ENCODE measurements at regions of chr11 and their contacts with region 1.

Region 1: DNA sequence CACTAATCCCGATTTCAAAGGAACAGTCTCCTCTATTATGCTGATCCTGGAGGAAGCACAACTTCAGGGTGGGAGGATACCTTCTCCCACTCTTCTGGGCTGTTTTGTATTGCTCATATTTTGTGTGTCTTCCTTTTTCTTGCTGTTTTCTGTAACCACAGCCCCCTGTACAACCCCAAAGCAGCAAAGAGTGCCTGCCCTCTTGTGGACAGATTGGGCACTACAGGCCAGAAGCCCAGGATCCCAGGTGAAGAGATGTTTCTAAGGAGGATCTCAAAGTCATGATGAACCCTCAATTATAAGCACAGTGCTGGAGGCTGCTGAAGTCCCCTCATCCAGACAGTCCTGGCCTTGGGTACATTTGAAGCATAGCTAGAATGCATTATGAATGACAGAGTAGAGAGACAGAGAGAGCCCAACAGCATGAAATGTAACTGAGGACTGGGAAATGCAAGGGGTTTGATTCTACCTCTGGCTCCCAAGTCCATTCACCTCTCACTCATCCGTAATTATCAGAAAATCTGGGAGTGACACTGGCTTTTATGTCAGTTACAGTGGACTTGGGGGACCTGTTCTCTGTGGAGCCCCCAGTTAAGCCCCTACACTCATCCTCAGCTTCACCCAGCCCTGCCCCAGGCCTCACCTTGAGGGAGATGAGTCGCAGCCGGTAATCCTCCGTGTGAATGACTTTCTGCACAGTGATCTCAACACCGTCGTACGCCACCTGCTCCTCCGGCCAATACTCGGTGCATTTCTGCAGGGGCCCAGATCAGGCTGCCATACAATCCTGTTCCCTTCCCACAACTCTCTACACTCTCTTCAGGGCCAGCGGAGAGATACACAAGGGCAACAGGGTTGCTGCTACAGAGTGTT is 6.2 kb upstream of the IGSF22 start:
- DNase-seq: peak; percentile 40 to 82 (median 67)
- ATAC-seq: peak; percentile 80
- H3K4me3 ChIP-seq: no peak overlapping the region
- H3K4me3 Mint-ChIP-seq: no peak overlapping the region
- H3K27ac ChIP-seq: no peak overlapping the region
- H3K27ac Mint-ChIP-seq: no peak overlapping the region
- H3K4me1 ChIP-seq: peaks cover 17% of the 10 kb centered on the region
- H3K4me1 Mint-ChIP-seq: peaks cover 10% of the 10 kb centered on the region
- H3K27me3 ChIP-seq: no peaks in the 10 kb centered on the region
- H3K27me3 Mint-ChIP-seq: no peaks in the 10 kb centered on the region
- CTCF ChIP-seq: peak; percentile 97

Region 2: GRCh38 chr11:18253231-18253630 is 479.0 kb before region 1 on chr11:
- CTCF ChIA-PET with region 1: no interaction called
- POLR2A ChIA-PET with region 1: no interaction called
- intact Hi-C with region 1: loop called in 1 of 2 experiments (anchors 10 kb)
- DNase-seq: no peak
- ATAC-seq: no peak
- H3K4me3 ChIP-seq: no peak overlapping the region
- H3K4me3 Mint-ChIP-seq: no peak overlapping the region
- H3K27ac ChIP-seq: no peak overlapping the region
- H3K27ac Mint-ChIP-seq: no peak overlapping the region
- H3K4me1 ChIP-seq: no peaks in the 10 kb centered on the region
- H3K4me1 Mint-ChIP-seq: no peaks in the 10 kb centered on the region
- H3K27me3 ChIP-seq: no peaks in the 10 kb centered on the region
- H3K27me3 Mint-ChIP-seq: peaks cover 8% of the 10 kb centered on the region
- CTCF ChIP-seq: no peak

Region 3: DNA sequence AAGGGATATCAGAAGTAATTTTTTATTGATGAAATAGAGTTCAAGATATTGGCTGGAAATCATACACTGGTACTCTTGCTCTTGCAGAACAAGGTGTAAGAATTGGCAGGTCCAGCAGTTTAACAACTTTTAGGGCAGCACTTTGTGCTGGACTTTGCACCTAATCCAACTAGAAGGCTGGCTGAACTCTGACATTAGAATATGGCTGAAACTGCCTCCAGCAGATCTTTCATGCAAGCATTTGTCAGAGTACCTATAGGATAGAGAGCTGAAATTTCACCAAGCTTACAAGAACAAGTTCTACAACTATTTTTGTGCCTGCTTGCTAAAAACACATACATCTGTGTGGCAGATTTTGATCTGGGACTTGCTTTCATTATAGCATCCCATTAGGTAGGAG is 427.4 kb before region 1 on chr11:
- CTCF ChIA-PET with region 1: no interaction called
- POLR2A ChIA-PET with region 1: no interaction called
- intact Hi-C with region 1: loop called in 1 of 2 experiments (anchors 10 kb)
- DNase-seq: no peak
- ATAC-seq: no peak
- H3K4me3 ChIP-seq: no peak overlapping the region
- H3K4me3 Mint-ChIP-seq: no peak overlapping the region
- H3K27ac ChIP-seq: no peak overlapping the region
- H3K27ac Mint-ChIP-seq: no peak overlapping the region
- H3K4me1 ChIP-seq: no peaks in the 10 kb centered on the region
- H3K4me1 Mint-ChIP-seq: no peaks in the 10 kb centered on the region
- H3K27me3 ChIP-seq: no peaks in the 10 kb centered on the region
- H3K27me3 Mint-ChIP-seq: no peaks in the 10 kb centered on the region
- CTCF ChIP-seq: no peak

Region 4: GRCh38 chr11:18347471-18348125 is 384.6 kb before region 1 on chr11:
- CTCF ChIA-PET with region 1: no interaction called
- POLR2A ChIA-PET with region 1: no interaction called
- intact Hi-C with region 1: no loop called
- DNase-seq: no peak
- ATAC-seq: no peak
- H3K4me3 ChIP-seq: no peak overlapping the region
- H3K4me3 Mint-ChIP-seq: no peak overlapping the region
- H3K27ac ChIP-seq: no peak overlapping the region
- H3K27ac Mint-ChIP-seq: peak overlapping the region; percentile 75
- H3K4me1 ChIP-seq: no peaks in the 10 kb centered on the region
- H3K4me1 Mint-ChIP-seq: peaks cover 17% of the 10 kb centered on the region
- H3K27me3 ChIP-seq: no peaks in the 10 kb centered on the region
- H3K27me3 Mint-ChIP-seq: no peaks in the 10 kb centered on the region
- CTCF ChIP-seq: no peak

Region 5: GRCh38 chr11:18463439-18463838 is 268.7 kb before region 1 on chr11:
- CTCF ChIA-PET with region 1: no interaction called
- POLR2A ChIA-PET with region 1: no interaction called
- intact Hi-C with region 1: no loop called
- DNase-seq: no peak
- ATAC-seq: no peak
- H3K4me3 ChIP-seq: no peak overlapping the region
- H3K4me3 Mint-ChIP-seq: no peak overlapping the region
- H3K27ac ChIP-seq: no peak overlapping the region
- H3K27ac Mint-ChIP-seq: no peak overlapping the region
- H3K4me1 ChIP-seq: no peaks in the 10 kb centered on the region
- H3K4me1 Mint-ChIP-seq: no peaks in the 10 kb centered on the region
- H3K27me3 ChIP-seq: no peaks in the 10 kb centered on the region
- H3K27me3 Mint-ChIP-seq: no peaks in the 10 kb centered on the region
- CTCF ChIP-seq: no peak

Measured in CD4-positive, alpha-beta T cell (primary cell).